Motor neuron (in vitro differentiated cells): ENCODE measurements at regions of chr3 and their contacts with region 1.

Region 1: DNA sequence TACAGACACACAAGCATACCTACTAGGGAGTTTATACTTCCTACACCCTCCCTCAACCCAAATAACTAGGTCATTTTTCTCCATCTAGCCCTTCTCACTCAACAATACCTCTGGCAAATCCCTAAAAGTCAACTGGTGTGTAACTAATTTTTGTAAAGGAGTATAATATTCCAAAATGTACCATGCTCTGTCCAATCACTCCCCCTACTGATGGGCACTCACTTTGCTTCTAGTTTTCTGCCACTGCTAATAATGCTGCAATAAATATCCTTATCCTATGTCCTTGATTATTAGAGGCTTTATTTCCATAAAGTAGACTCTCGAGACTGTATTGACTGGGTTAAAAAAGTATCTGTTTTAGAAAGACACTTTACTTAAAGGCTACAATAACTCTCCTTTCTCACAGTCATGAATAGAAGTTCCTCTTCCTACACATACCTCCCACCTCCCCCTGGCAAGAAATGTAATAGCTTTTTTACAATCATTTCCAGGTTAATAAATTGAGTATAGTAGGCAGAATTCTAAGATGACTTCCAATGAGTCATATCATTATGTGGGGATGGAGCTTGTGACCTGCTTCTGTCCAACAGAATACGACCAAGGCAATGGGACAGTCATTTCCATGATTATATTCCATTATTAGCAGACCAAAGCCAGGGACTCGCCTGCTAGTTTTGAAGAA is 30.0 kb downstream of the SHQ1 start:
- ATAC-seq: peak; percentile 14 to 55 (median 36)
- H3K4me3 ChIP-seq: no peak overlapping the region
- H3K27ac ChIP-seq: no peak overlapping the region
- H3K4me1 ChIP-seq: peaks cover 12% of the 10 kb centered on the region in 2 donors

Region 2: DNA sequence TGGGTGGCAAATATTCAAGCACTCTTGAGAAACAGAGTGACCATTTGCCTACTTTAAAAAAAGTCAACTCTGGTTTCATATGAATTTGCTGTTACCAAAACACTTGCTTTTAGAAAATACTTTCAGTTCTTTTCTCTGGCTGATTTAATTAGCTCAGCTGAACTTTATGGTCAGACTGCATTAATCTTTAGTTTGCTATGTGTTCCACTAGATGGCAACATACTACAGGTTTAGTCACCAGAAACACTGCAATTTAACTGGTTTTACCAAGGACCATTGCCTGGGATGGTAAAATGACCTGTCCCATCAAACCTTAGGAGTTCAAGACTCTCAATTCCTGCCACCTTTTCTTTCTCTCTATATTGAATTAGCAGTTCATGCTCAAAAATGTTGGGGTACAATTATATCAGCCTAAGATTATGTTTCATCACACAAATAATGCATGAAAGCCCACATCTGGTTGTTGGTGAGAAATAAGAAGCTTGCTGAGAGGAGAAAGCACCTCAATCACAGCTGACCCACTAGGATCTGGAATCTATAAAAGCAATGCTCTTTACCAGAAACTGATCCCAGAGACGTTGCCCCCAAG is 1107.2 kb before region 1 on chr3:
- in situ Hi-C with region 1: loop called in 2 of 9 experiments (anchors 25 kb)
- ATAC-seq: peak in 6 of 8 experiments; percentile 49 to 85 (median 74)
- H3K4me3 ChIP-seq: no peak overlapping the region
- H3K27ac ChIP-seq: no peak overlapping the region
- H3K4me1 ChIP-seq: no peaks in the 10 kb centered on the region

Region 3: DNA sequence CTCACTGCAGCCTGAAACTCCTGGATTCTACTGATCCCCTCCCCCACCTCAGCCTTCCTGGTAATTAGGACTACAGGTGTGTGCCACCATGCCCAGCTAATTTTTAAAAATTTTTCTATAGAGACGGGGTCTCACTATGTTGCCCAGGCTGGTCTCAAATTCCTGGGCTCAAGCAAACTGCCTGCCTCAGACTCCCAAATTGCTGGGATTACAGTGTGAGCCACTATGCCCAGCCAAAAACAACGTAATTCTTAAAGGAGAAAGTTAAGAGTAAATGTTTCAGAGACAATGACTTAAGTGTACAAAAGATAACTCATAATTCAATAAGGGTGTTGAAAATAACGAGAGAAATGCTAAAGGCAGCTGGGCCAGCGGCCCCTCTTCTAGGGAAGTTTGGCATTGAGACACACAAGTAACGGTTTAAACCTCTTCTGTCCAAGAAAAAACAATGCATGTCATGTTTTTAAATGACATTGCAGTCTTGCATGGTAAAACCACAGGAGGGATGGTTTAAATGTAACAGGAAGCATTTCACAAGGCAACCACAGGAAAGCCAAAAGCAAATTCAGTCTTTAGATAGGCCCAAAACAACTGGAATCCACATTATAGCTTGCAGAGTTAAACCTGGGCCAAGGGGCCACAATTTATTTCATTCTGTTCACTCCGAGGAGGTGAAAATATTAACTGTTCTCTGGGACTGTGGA is 1038.4 kb before region 1 on chr3:
- in situ Hi-C with region 1: no loop called
- ATAC-seq: no peak
- H3K4me3 ChIP-seq: no peak overlapping the region
- H3K27ac ChIP-seq: no peak overlapping the region
- H3K4me1 ChIP-seq: peaks cover 7% of the 10 kb centered on the region in 2 donors

Region 4: GRCh38 chr3:71862371-71863140 is 955.7 kb before region 1 on chr3:
- in situ Hi-C with region 1: loop called in 1 of 9 experiments (anchors 10 kb)
- ATAC-seq: peak in 2 of 8 experiments; percentile 52 to 66
- H3K4me3 ChIP-seq: no peak overlapping the region
- H3K27ac ChIP-seq: no peak overlapping the region
- H3K4me1 ChIP-seq: no peaks in the 10 kb centered on the region

Region 5: DNA sequence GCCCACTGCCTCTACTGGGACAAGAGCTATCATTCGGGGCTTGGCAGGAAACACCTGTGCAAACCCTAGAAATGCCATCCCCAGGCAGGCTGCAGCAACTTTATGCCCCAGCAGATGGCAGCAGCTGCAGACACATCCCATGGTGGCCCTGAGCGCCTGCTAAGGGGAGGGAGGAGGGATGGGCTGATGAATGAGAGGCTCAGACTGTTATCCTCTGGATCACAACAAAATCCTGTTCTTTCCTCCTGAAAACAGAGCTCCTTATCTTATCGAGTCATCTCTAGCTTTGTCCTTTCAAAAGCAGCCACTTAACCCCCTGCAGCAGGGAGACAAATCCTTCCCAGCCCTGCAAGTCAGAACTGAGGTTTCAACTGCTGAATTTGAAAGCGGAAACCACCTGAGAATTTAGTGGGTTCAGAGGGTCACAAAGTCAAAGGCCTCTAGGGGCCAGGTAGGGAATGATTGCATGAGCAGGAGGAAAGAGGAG is 942.7 kb before region 1 on chr3:
- in situ Hi-C with region 1: loop called in 1 of 9 experiments (anchors 25 kb)
- ATAC-seq: peak; percentile 87 to 97 (median 92)
- H3K4me3 ChIP-seq: no peak overlapping the region
- H3K27ac ChIP-seq: no peak overlapping the region
- H3K4me1 ChIP-seq: peaks cover 3 to 5% of the 10 kb centered on the region in 2 donors

Region 6: DNA sequence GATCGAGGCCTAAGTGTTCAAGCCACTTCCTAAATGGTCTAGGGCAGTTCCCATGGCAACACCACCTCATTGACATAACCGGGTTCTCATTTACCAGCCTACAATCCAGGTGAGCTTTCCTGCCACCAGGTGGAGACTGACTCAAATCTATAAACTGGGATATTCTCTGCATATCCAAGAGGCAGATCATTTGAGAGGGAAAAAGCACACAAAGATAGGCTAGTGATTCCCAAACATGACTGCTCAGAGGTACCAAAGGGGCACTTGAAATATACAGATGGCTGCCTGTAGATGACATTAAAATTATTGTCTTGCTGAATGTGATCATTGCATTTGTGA is 892.0 kb before region 1 on chr3:
- in situ Hi-C with region 1: loop called in 1 of 9 experiments (anchors 25 kb)
- ATAC-seq: peak in 5 of 8 experiments; percentile 65 to 83 (median 71)
- H3K4me3 ChIP-seq: no peak overlapping the region
- H3K27ac ChIP-seq: no peak overlapping the region
- H3K4me1 ChIP-seq: peaks cover 0 to 13% of the 10 kb centered on the region in 2 donors

Region 7: GRCh38 chr3:71955240-71956068 is 862.8 kb before region 1 on chr3:
- in situ Hi-C with region 1: loop called in 1 of 9 experiments (anchors 25 kb)
- ATAC-seq: peak; percentile 72 to 95 (median 90)
- H3K4me3 ChIP-seq: no peak overlapping the region
- H3K27ac ChIP-seq: no peak overlapping the region
- H3K4me1 ChIP-seq: peaks cover 8 to 12% of the 10 kb centered on the region in 2 donors

Region 8: GRCh38 chr3:72447059-72447946 is 370.9 kb before region 1 on chr3:
- in situ Hi-C with region 1: loop called in 2 of 9 experiments (anchors 25 kb)
- ATAC-seq: peak; percentile 85 to 95 (median 90)
- H3K4me3 ChIP-seq: peak overlapping the region; percentile 59 to 97 (median 64)
- H3K27ac ChIP-seq: peak overlapping the region in 1 of 2 donors; percentile 64
- H3K4me1 ChIP-seq: peaks cover 29 to 31% of the 10 kb centered on the region in 2 donors

Region 9: DNA sequence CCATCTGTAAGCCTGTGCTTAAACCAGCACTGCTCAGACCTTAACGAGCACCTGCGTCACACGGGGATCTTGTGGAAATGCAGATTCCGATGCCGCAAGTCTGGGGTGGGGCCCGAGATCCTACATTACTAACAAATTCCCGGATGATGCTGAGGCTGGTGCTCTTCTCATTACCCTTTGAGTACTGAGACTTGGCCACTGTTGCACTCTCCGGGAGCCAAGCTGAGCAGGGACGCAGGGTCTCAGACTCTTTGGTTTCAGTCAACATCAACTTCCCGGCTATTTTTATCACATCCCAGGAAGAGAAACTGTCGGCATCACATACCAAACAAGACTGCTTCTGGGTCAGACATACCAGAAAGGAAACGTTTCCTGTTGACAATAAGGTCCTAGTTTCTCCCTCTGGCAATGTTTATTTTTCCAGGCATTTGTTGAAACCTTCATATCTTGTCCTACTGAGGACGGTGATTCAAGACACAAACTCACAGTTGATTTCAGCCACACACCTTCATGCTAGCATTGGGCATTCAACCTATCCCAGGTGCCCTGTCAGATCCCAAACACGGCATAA is 246.5 kb before region 1 on chr3:
- in situ Hi-C with region 1: no loop called
- ATAC-seq: no peak
- H3K4me3 ChIP-seq: no peak overlapping the region
- H3K27ac ChIP-seq: no peak overlapping the region
- H3K4me1 ChIP-seq: peaks cover 10 to 13% of the 10 kb centered on the region in 2 donors

Region 10: GRCh38 chr3:72960812-72961518 is 142.7 kb after region 1 on chr3:
- in situ Hi-C with region 1: no loop called
- ATAC-seq: peak in 4 of 8 experiments; percentile 44 to 69 (median 44)
- H3K4me3 ChIP-seq: no peak overlapping the region
- H3K27ac ChIP-seq: no peak overlapping the region
- H3K4me1 ChIP-seq: no peaks in the 10 kb centered on the region

Region 11: GRCh38 chr3:73292220-73292619 is 474.0 kb after region 1 on chr3:
- in situ Hi-C with region 1: no loop called
- ATAC-seq: no peak
- H3K4me3 ChIP-seq: no peak overlapping the region
- H3K27ac ChIP-seq: no peak overlapping the region
- H3K4me1 ChIP-seq: peaks cover 10 to 27% of the 10 kb centered on the region in 2 donors